ENCODE measurements at regions of chr2 and their contacts with region 1.

Region 1: GRCh38 chr2:213015387-213016165 is 135.8 kb downstream of the IKZF2 start:
- DNase-seq: peak; percentile 78
- ATAC-seq: peak; percentile 81
- H3K4me3 Mint-ChIP-seq: no peak overlapping the region
- H3K27ac Mint-ChIP-seq: no peak overlapping the region
- H3K4me1 Mint-ChIP-seq: peaks cover 36% of the 10 kb centered on the region
- H3K27me3 Mint-ChIP-seq: peaks cover 17% of the 10 kb centered on the region

Region 2: GRCh38 chr2:212730994-212731393 is 284.6 kb before region 1 on chr2:
- CTCF ChIA-PET with region 1: no interaction called
- POLR2A ChIA-PET with region 1: no interaction called
- intact Hi-C with region 1: loop called (anchors 5 kb)
- DNase-seq: no peak
- ATAC-seq: peak; percentile 85
- H3K4me3 Mint-ChIP-seq: no peak overlapping the region
- H3K27ac Mint-ChIP-seq: no peak overlapping the region
- H3K4me1 Mint-ChIP-seq: peaks cover 14% of the 10 kb centered on the region
- H3K27me3 Mint-ChIP-seq: no peaks in the 10 kb centered on the region

Region 3: GRCh38 chr2:212912445-212913103 is 103.0 kb before region 1 on chr2:
- CTCF ChIA-PET with region 1: no interaction called
- POLR2A ChIA-PET with region 1: no interaction called
- intact Hi-C with region 1: loop called (anchors 1 to 5 kb)
- DNase-seq: no peak
- ATAC-seq: no peak
- H3K4me3 Mint-ChIP-seq: no peak overlapping the region
- H3K27ac Mint-ChIP-seq: no peak overlapping the region
- H3K4me1 Mint-ChIP-seq: peaks cover 26% of the 10 kb centered on the region
- H3K27me3 Mint-ChIP-seq: peaks cover 12% of the 10 kb centered on the region

Region 4: DNA sequence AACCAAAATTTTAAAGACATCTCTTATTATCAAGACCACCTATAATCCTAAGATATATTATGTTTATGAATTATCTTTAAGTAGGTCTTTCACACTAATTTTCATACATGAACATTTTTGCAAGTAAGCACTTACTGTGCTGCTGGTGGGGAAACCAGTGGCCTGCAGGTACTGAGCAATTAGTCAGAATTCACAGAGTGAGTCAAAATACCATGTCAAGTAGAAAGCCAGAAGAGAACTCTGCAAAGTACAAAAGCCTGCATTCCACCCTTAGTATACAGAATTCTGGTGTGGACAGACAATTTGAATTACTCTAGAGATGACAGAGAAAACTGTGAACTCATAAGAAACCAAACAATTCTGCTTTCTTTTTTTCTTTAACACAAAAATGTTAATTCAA is 47.3 kb before region 1 on chr2:
- CTCF ChIA-PET with region 1: interaction called, 3 read pairs
- POLR2A ChIA-PET with region 1: no interaction called
- intact Hi-C with region 1: loop called in 1 of 2 experiments (anchors 1 kb)
- DNase-seq: peak; percentile 44
- ATAC-seq: peak; percentile 93
- H3K4me3 Mint-ChIP-seq: no peak overlapping the region
- H3K27ac Mint-ChIP-seq: peak overlapping the region; percentile 38
- H3K4me1 Mint-ChIP-seq: peaks cover 20% of the 10 kb centered on the region
- H3K27me3 Mint-ChIP-seq: no peaks in the 10 kb centered on the region

Region 5: GRCh38 chr2:213034585-213034984 is 19.0 kb after region 1 on chr2:
- CTCF ChIA-PET with region 1: no interaction called
- POLR2A ChIA-PET with region 1: no interaction called
- intact Hi-C with region 1: loop called (anchors 2 kb)
- DNase-seq: no peak
- ATAC-seq: peak; percentile 64
- H3K4me3 Mint-ChIP-seq: no peak overlapping the region
- H3K27ac Mint-ChIP-seq: no peak overlapping the region
- H3K4me1 Mint-ChIP-seq: peaks cover 39% of the 10 kb centered on the region
- H3K27me3 Mint-ChIP-seq: peaks cover 1% of the 10 kb centered on the region